ENCODE measurements at regions of chr9 and their contacts with region 1.

Region 1: DNA sequence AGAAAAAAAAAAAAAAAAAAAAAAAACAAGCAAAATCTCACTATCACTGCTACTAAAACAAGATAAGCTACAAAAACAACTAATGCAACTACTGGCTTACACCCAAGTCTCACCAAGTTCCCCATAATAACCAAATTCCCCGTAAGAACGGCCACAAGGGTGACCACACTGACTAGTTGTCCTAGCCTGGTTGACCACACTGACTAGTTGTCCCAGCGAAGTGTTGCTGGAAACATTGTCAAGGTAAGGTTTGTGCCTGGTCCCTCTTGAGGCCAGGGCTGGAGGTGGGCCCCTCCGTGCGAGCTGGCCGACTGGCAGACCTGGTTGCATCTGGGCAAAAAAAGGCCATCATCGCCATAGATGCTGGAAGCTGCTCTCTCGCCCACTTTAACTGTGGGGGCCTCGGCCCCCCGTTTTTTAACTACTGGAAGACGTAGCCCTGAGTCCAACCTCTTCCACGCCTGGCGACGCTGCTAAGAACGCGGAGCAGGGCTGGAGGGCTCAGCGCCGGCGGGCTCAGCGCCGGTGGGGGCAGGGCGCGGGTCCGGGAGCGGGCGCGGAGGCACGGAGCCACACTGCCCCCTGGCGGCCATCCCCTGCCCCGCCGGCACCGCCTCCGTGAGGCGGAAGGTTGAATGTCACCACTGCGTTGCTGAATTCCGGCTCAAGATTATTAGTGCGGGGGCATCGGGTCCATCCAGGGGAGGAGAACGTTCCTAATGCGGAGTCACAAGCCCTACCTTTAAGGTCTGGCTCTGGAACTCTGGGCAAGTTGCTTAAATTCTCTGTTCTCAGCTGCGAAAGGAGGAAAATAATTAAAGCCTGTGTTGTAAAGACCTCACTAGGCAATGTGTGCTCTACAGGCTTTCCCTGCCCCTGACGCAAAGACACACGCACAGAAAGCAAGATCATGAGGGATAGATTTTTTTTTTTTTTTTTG is 84.0 kb downstream of the HSD17B3 start:
- DNase-seq: peak; percentile 93

Region 2: GRCh38 chr9:94945197-94946144 is 1272.6 kb before region 1 on chr9:
- intact Hi-C with region 1: loop called in 1 of 2 experiments (anchors 10 kb)
- DNase-seq: peak; percentile 90

Region 3: DNA sequence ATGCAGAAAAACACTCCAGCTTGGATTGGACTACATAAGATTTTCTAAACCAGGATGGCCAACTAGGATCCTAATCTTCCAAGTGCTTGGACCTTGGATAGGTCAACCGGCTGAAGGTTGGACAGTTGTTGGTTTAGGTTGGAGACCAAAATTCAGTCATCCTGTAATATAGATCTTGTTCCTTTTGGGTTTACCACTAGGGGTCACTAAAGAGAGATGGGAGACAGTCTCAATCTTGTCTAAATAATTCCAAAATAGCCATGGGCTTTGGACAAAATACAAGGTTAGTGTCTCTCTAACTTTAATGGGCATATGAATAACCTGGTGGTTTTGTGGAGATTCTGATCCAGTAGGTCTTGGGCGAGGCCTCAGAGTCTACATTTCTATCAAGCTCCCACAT is 491.3 kb before region 1 on chr9:
- intact Hi-C with region 1: loop called in 1 of 2 experiments (anchors 10 kb)
- DNase-seq: no peak